Left colon (tissue), 2 donors: ENCODE measurements at regions of chr6 and their contacts with region 1.

Region 1: GRCh38 chr6:128731249-128732165 is 151.4 kb upstream of the LAMA2 start:
- DNase-seq: no peak
- ATAC-seq: peak; percentile 71

Region 2: DNA sequence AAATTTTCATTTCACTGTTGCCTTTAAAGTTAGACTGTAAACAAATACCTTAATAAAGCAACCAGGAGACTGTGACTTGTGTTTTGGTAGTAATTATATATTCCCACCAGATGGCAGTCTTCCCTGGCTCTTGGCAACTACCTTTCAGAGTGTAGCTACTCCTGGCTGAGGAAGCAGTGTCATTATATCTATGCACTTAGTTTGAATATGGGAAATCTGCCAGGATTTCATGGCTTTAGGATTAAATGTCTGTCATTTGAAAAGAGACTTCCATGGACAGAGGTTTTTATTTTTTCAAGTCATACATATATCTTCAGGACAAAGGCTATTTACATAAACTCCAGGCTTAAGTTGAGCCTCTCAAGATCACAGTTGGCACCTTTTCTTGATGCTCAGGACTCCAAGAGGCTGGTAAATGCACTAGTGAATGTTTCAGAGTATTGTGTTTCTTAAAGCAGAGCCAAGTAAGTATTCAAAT is 994.5 kb before region 1 on chr6:
- intact Hi-C with region 1: loop called in 1 of 2 experiments (anchors 10 kb)
- DNase-seq: peak in 1 of 2 donors; percentile 5
- ATAC-seq: peak; percentile 84

Region 3: DNA sequence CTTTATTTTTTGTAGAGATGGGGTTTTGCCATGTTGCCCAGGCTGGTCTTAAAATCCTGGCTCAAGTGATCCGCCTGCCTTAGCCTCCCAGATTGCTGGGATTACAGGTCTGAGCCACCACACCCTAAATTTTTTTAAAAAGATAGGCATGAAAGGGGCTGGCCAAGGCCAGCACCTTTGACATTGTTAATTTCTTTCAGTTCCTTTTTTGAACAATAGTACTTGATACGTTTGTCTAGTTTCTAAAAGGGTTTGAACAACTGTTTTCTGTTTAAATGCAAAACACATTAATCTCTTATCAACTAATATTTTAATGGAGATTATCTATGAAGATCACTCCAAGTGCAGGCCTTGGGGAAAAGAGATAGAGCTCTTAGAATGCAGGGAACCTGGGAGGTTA is 173.5 kb before region 1 on chr6:
- intact Hi-C with region 1: no loop called
- DNase-seq: no peak
- ATAC-seq: no peak